ENCODE measurements at regions of chr3 and their contacts with region 1.

Region 1: GRCh38 chr3:106022913-106023312 is 154.1 kb upstream of the CBLB start:
- DNase-seq: no peak
- H3K4me3 ChIP-seq: no peak overlapping the region
- H3K27ac ChIP-seq: no peak overlapping the region
- H3K4me1 ChIP-seq: no peaks in the 10 kb centered on the region
- CTCF ChIP-seq: no peak

Region 2: DNA sequence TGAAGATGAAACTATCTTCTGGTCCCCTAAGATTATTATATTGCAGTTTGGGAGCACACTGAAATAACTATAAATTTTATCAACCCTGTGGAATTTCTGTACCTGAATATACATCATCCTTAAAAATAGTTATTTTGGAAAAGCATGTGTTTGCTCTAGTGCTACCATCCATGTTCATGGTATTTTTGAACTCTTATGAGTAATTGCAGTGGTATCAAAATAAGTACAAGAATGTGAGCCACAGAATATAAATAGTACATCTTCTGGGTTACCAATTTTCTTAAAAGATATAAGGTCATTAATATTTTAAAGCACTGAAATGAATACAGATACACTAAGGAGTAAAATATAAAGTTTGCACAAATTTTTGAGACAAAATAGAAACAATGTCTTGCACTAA is 360.6 kb before region 1 on chr3:
- CTCF ChIA-PET with region 1: no interaction called
- POLR2A ChIA-PET with region 1: no interaction called
- intact Hi-C with region 1: no loop called
- DNase-seq: no peak
- H3K4me3 ChIP-seq: no peak overlapping the region
- H3K27ac ChIP-seq: no peak overlapping the region
- H3K4me1 ChIP-seq: no peaks in the 10 kb centered on the region
- CTCF ChIP-seq: no peak

Region 3: DNA sequence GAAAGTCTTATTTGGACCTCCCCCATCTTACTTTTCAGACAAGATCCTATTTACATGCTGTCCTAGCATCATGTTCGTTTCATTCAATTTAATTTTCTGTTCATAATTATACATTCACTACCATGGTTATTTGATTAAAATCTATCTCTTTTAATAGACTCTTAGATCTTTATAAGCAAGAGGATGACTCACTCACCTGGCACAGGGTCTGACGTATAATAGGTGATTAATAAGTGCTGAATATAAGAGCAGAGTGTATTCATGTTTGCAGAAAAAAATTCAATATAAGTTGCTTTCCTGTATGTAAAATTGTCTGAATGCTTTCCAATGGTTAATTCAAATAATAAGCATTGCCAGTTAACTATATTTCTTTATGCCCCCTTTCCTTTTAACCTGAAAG is 11.4 kb after region 1 on chr3:
- CTCF ChIA-PET with region 1: no interaction called
- POLR2A ChIA-PET with region 1: interaction called, 10 read pairs
- intact Hi-C with region 1: no loop called
- DNase-seq: no peak
- H3K4me3 ChIP-seq: no peak overlapping the region
- H3K27ac ChIP-seq: no peak overlapping the region
- H3K4me1 ChIP-seq: no peaks in the 10 kb centered on the region
- CTCF ChIP-seq: no peak

Region 4: GRCh38 chr3:106097817-106098435 is 75.0 kb after region 1 on chr3:
- CTCF ChIA-PET with region 1: no interaction called
- POLR2A ChIA-PET with region 1: no interaction called
- intact Hi-C with region 1: no loop called
- DNase-seq: no peak
- H3K4me3 ChIP-seq: no peak overlapping the region
- H3K27ac ChIP-seq: no peak overlapping the region
- H3K4me1 ChIP-seq: no peaks in the 10 kb centered on the region
- CTCF ChIP-seq: no peak

Measured in OCI-LY7 (cell line).